Activated CD8-positive, alpha-beta T cell treated with anti-CD3 and anti-CD28 coated beads, Interleukin-2, amount 10 ng/mL, durations not matched to agents 7 days and 5 days (primary cell): ENCODE measurements at regions of chr1 and their contacts with region 1.

Region 1: GRCh38 chr1:115706587-115707425 is 61.7 kb downstream of the CASQ2 start:
- DNase-seq: peak; percentile 23
- ATAC-seq: no peak
- H3K4me3 Mint-ChIP-seq: no peak overlapping the region
- H3K27ac Mint-ChIP-seq: no peak overlapping the region
- H3K4me1 Mint-ChIP-seq: no peaks in the 10 kb centered on the region
- H3K27me3 Mint-ChIP-seq: peaks cover 11% of the 10 kb centered on the region

Region 2: GRCh38 chr1:115609021-115609420 is 97.8 kb before region 1 on chr1:
- CTCF ChIA-PET with region 1: interaction called, 57 read pairs
- POLR2A ChIA-PET with region 1: no interaction called
- DNase-seq: no peak
- ATAC-seq: no peak
- H3K4me3 Mint-ChIP-seq: no peak overlapping the region
- H3K27ac Mint-ChIP-seq: no peak overlapping the region
- H3K4me1 Mint-ChIP-seq: no peaks in the 10 kb centered on the region
- H3K27me3 Mint-ChIP-seq: peaks cover 7% of the 10 kb centered on the region

Region 3: GRCh38 chr1:115648717-115649691 is 57.8 kb before region 1 on chr1:
- CTCF ChIA-PET with region 1: interaction called, 18 read pairs
- POLR2A ChIA-PET with region 1: no interaction called
- DNase-seq: peak; percentile 41
- ATAC-seq: peak; percentile 69
- H3K4me3 Mint-ChIP-seq: no peak overlapping the region
- H3K27ac Mint-ChIP-seq: no peak overlapping the region
- H3K4me1 Mint-ChIP-seq: peaks cover 3% of the 10 kb centered on the region
- H3K27me3 Mint-ChIP-seq: no peaks in the 10 kb centered on the region

Region 4: DNA sequence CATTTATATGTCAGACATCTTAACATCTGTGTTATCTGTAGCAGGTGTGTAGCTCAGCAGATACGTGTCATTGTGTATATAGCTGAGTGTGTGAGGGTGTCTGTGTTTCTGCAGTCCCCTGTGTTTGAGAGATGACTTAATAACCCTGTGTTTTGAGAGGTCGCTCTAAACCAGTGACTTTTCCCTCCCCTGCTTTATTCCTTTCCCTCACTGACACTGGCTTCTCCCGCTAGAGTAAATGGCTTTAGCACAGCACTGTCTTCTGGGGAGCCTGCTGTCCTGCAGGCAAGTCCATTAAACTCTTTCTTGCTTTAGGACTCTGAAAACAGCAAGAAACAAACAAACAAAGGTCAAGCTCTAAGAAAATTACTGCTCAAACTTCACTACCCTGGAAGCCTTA is 12.0 kb before region 1 on chr1:
- CTCF ChIA-PET with region 1: interaction called, 11 read pairs
- POLR2A ChIA-PET with region 1: no interaction called
- DNase-seq: no peak
- ATAC-seq: no peak
- H3K4me3 Mint-ChIP-seq: no peak overlapping the region
- H3K27ac Mint-ChIP-seq: no peak overlapping the region
- H3K4me1 Mint-ChIP-seq: no peaks in the 10 kb centered on the region
- H3K27me3 Mint-ChIP-seq: peaks cover 7% of the 10 kb centered on the region

Region 5: DNA sequence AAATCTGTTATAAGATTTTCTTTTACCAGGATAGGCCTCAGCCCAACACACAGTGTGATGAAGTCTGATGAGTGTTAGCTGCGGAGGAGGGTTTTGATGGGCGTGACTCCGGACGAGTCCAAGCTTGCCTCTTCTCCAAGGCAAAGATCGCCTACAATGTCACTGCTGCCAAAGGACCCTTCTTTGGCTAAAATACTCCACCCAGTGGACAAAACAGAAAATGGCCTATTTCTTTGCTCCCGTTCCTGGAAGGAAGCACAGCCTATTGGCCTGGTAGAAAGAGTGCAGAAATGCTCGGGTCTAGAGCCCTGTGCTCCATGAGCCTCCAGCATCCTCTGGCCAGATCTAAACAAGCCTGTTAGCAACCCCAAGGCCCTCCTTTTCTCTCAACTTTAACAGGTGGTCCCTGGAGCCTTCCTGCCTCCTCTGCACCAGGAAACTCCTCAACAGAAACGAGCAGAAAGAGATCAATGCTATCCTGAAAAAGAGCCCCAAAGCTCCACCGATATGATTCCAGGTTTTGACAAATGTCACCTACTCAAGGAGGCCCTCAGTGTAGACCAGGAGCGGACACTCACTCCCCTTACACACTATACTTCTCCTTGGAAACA is 65.1 kb after region 1 on chr1:
- CTCF ChIA-PET with region 1: interaction called, 13 read pairs
- POLR2A ChIA-PET with region 1: no interaction called
- DNase-seq: peak; percentile 34
- ATAC-seq: peak; percentile 64
- H3K4me3 Mint-ChIP-seq: no peak overlapping the region
- H3K27ac Mint-ChIP-seq: no peak overlapping the region
- H3K4me1 Mint-ChIP-seq: no peaks in the 10 kb centered on the region
- H3K27me3 Mint-ChIP-seq: peaks cover 3% of the 10 kb centered on the region